ENCODE measurements at regions of chr2 and their contacts with region 1.

Region 1: GRCh38 chr2:47402805-47403608 is at the start of gene MSH2:
- DNase-seq: peak; percentile 92
- H3K4me3 Mint-ChIP-seq: peak within 1 kb of the TSS; percentile 99
- H3K27ac Mint-ChIP-seq: peak within 1 kb of the TSS; percentile 94
- H3K4me1 Mint-ChIP-seq: peaks cover 27% of the 10 kb centered on the region
- H3K27me3 Mint-ChIP-seq: no peaks in the 10 kb centered on the region
- total RNA-seq, gene MSH2: 66.2 and 66.7 TPM in 2 replicates

Region 2: GRCh38 chr2:45585267-45585861 is 1817.6 kb before region 1 on chr2:
- intact Hi-C with region 1: no loop called
- DNase-seq: no peak
- H3K4me3 Mint-ChIP-seq: no peak overlapping the region
- H3K27ac Mint-ChIP-seq: no peak overlapping the region
- H3K4me1 Mint-ChIP-seq: peaks cover 15% of the 10 kb centered on the region
- H3K27me3 Mint-ChIP-seq: no peaks in the 10 kb centered on the region

Region 3: DNA sequence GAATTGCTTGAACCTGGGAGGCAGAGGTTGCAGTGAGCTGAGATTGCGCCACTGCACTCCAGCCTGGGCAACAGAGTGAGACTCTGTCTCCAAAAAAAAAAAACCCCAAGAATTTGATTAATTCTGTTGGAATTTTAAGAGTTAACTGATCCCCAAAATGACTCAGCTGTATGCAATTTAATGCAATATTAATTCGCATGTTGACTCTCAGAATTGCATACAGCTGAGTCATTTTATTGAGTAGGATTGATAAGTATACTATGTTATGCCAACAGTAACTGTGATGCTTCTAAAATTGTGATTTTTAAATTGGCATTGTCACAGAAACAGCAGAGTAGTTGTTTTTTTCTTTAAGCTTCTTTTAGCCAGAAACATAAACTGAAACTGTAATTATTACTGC is 19.6 kb after region 1 on chr2:
- intact Hi-C with region 1: no loop called
- DNase-seq: no peak
- H3K4me3 Mint-ChIP-seq: no peak overlapping the region
- H3K27ac Mint-ChIP-seq: no peak overlapping the region
- H3K4me1 Mint-ChIP-seq: no peaks in the 10 kb centered on the region
- H3K27me3 Mint-ChIP-seq: no peaks in the 10 kb centered on the region

Region 4: GRCh38 chr2:47520825-47521665 is 118.0 kb after region 1 on chr2:
- intact Hi-C with region 1: loop called (anchors 1 kb)
- DNase-seq: peak; percentile 74
- H3K4me3 Mint-ChIP-seq: peak overlapping the region; percentile 86
- H3K27ac Mint-ChIP-seq: peak overlapping the region; percentile 91
- H3K4me1 Mint-ChIP-seq: peaks cover 19% of the 10 kb centered on the region
- H3K27me3 Mint-ChIP-seq: peaks cover 2% of the 10 kb centered on the region

Region 5: DNA sequence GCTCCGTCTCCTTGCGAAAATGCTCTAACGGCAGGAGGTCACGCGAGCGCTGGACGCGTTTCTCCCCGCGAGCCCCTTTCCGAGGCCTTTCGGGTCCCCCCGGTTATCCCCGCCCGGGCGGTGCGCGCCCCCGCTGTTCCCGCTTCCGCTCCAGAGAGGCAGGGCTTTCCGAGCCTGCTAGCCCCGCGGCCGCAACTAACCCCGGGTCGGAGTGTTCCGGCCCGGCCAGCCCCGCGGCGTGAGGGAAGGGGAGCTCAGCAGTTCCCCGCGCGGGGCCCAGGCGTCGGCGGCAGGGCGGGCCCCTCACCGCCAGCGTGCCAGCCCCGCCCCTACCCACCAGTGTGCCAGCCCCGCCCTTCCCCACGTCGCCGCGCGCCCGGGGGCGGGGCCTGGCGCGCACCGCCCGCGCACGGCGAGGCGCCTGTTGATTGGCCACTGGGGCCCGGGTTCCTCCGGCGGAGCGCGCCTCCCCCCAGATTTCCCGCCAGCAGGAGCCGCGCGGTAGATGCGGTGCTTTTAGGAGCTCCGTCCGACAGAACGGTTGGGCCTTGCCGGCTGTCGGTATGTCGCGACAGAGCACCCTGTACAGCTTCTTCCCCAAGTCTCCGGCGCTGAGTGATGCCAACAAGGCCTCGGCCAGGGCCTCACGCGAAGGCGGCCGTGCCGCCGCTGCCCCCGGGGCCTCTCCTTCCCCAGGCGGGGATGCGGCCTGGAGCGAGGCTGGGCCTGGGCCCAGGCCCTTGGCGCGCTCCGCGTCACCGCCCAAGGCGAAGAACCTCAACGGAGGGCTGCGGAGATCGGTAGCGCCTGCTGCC is 379.9 kb after region 1 on chr2 and contains the start of gene MSH6:
- intact Hi-C with region 1: loop called (anchors 1 kb)
- DNase-seq: peak; percentile 87
- H3K4me3 Mint-ChIP-seq: peak within 1 kb of the TSS; percentile 88
- H3K27ac Mint-ChIP-seq: peak within 1 kb of the TSS; percentile 82
- H3K4me1 Mint-ChIP-seq: peaks cover 9% of the 10 kb centered on the region
- H3K27me3 Mint-ChIP-seq: no peaks in the 10 kb centered on the region
- total RNA-seq, gene MSH6: 119 and 132 TPM in 2 replicates